CD14-positive monocyte (primary cell): ENCODE measurements at regions of chr15 and their contacts with region 1.

Region 1: GRCh38 chr15:75042730-75043508 is 19.5 kb downstream of the PPCDC start:
- DNase-seq: peak; percentile 99 to 100 (median 99)
- H3K4me3 ChIP-seq: peak overlapping the region in 1 of 3 experiments; percentile 65
- H3K4me3 Mint-ChIP-seq: peak overlapping the region; percentile 75 to 78
- H3K27ac ChIP-seq: peak overlapping the region; percentile 98 to 100
- H3K27ac Mint-ChIP-seq: peak overlapping the region; percentile 98 to 100 (median 99)
- H3K4me1 ChIP-seq: peaks cover 85 to 98% of the 10 kb centered on the region in 2 donors
- H3K4me1 Mint-ChIP-seq: peaks cover 95% of the 10 kb centered on the region
- H3K27me3 ChIP-seq: no peaks in the 10 kb centered on the region
- H3K27me3 Mint-ChIP-seq: peaks cover 0 to 4% (median 2%) of the 10 kb centered on the region in 3 donors
- CTCF ChIP-seq: peak; percentile 78

Region 2: GRCh38 chr15:75029378-75030022 is 13.4 kb before region 1 on chr15:
- intact Hi-C with region 1: loop called in 1 of 2 experiments (anchors 2 kb)
- DNase-seq: peak; percentile 90 to 94 (median 94)
- H3K4me3 ChIP-seq: peak overlapping the region in 2 of 3 experiments; percentile 12 to 64
- H3K4me3 Mint-ChIP-seq: peak overlapping the region; percentile 65 to 84
- H3K27ac ChIP-seq: peak overlapping the region; percentile 82 to 84
- H3K27ac Mint-ChIP-seq: peak overlapping the region; percentile 83 to 92 (median 89)
- H3K4me1 ChIP-seq: peaks cover 70 to 71% of the 10 kb centered on the region in 2 donors
- H3K4me1 Mint-ChIP-seq: peaks cover 66% of the 10 kb centered on the region
- H3K27me3 ChIP-seq: no peaks in the 10 kb centered on the region
- H3K27me3 Mint-ChIP-seq: peaks cover 0 to 1% (median 0%) of the 10 kb centered on the region in 3 donors
- CTCF ChIP-seq: peak; percentile 81

Region 3: GRCh38 chr15:75076277-75076676 is 33.4 kb after region 1 on chr15:
- intact Hi-C with region 1: loop called (anchors 5 kb)
- DNase-seq: no peak
- H3K4me3 ChIP-seq: no peak overlapping the region
- H3K4me3 Mint-ChIP-seq: no peak overlapping the region
- H3K27ac ChIP-seq: peak overlapping the region; percentile 48 to 82
- H3K27ac Mint-ChIP-seq: peak overlapping the region in 2 of 7 donors; percentile 50 to 63
- H3K4me1 ChIP-seq: peaks cover 41 to 48% of the 10 kb centered on the region in 2 donors
- H3K4me1 Mint-ChIP-seq: peaks cover 35% of the 10 kb centered on the region
- H3K27me3 ChIP-seq: no peaks in the 10 kb centered on the region
- H3K27me3 Mint-ChIP-seq: peaks cover 2 to 7% (median 4%) of the 10 kb centered on the region in 3 donors
- CTCF ChIP-seq: no peak

Region 4: GRCh38 chr15:75090388-75090734 is 47.4 kb after region 1 on chr15:
- intact Hi-C with region 1: loop called in 1 of 2 experiments (anchors 1 kb)
- DNase-seq: peak; percentile 76 to 97 (median 90)
- H3K4me3 ChIP-seq: peak overlapping the region in 2 of 3 experiments; percentile 20 to 53
- H3K4me3 Mint-ChIP-seq: peak overlapping the region; percentile 62 to 84
- H3K27ac ChIP-seq: peak overlapping the region in 1 of 2 donors; percentile 65
- H3K27ac Mint-ChIP-seq: peak overlapping the region; percentile 79 to 91 (median 83)
- H3K4me1 ChIP-seq: peaks cover 15 to 16% of the 10 kb centered on the region in 2 donors
- H3K4me1 Mint-ChIP-seq: peaks cover 17% of the 10 kb centered on the region
- H3K27me3 ChIP-seq: no peaks in the 10 kb centered on the region
- H3K27me3 Mint-ChIP-seq: peaks cover 0 to 6% (median 0%) of the 10 kb centered on the region in 3 donors
- CTCF ChIP-seq: no peak

Region 5: GRCh38 chr15:75104804-75105535 is 62.1 kb after region 1 on chr15:
- intact Hi-C with region 1: loop called (anchors 1 to 5 kb)
- DNase-seq: peak; percentile 88 to 95 (median 95)
- H3K4me3 ChIP-seq: peak overlapping the region in 1 of 3 experiments; percentile 26
- H3K4me3 Mint-ChIP-seq: peak overlapping the region; percentile 32 to 44
- H3K27ac ChIP-seq: peak overlapping the region; percentile 77 to 93
- H3K27ac Mint-ChIP-seq: peak overlapping the region; percentile 87 to 97 (median 94)
- H3K4me1 ChIP-seq: peaks cover 53 to 57% of the 10 kb centered on the region in 2 donors
- H3K4me1 Mint-ChIP-seq: peaks cover 61% of the 10 kb centered on the region
- H3K27me3 ChIP-seq: no peaks in the 10 kb centered on the region
- H3K27me3 Mint-ChIP-seq: peaks cover 0 to 5% (median 0%) of the 10 kb centered on the region in 3 donors
- CTCF ChIP-seq: no peak

Region 6: DNA sequence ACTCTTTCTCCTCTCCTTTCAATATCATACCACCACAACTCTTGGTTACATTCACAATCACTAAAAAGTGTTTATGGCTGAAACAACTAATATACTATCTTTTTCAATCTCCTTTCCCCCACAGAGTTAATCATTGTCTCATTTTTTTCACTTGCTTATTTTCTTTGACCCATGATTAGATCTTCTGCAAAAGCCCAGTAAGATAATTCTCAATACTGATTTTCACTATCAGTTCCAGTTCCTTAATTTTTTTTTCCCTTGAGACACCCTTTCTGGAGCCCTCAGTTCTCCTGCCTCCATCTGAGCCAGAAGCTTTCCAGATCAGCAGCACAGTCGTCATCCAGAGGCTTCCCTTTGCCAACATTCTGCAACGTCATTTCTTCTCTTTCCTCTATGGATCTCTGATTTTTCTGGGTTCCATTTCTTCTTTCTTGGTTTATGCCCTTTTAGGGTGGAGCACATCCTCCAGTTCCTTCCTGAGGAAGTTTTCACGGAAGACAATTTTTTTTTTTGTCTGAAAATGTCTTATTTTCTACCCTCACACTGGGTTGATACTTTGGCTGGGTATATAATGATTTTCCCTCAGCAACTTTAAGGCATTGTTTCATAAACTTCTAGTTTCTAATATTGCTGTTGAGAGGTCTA is 70.1 kb after region 1 on chr15:
- intact Hi-C with region 1: loop called (anchors 1 to 5 kb)
- DNase-seq: peak; percentile 74 to 92 (median 89)
- H3K4me3 ChIP-seq: peak overlapping the region in 1 of 3 experiments; percentile 12
- H3K4me3 Mint-ChIP-seq: peak overlapping the region; percentile 38 to 71
- H3K27ac ChIP-seq: peak overlapping the region; percentile 87 to 96
- H3K27ac Mint-ChIP-seq: peak overlapping the region; percentile 94 to 99 (median 96)
- H3K4me1 ChIP-seq: peaks cover 63 to 64% of the 10 kb centered on the region in 2 donors
- H3K4me1 Mint-ChIP-seq: peaks cover 65% of the 10 kb centered on the region
- H3K27me3 ChIP-seq: no peaks in the 10 kb centered on the region
- H3K27me3 Mint-ChIP-seq: peaks cover 0 to 7% (median 0%) of the 10 kb centered on the region in 3 donors
- CTCF ChIP-seq: no peak

Region 7: DNA sequence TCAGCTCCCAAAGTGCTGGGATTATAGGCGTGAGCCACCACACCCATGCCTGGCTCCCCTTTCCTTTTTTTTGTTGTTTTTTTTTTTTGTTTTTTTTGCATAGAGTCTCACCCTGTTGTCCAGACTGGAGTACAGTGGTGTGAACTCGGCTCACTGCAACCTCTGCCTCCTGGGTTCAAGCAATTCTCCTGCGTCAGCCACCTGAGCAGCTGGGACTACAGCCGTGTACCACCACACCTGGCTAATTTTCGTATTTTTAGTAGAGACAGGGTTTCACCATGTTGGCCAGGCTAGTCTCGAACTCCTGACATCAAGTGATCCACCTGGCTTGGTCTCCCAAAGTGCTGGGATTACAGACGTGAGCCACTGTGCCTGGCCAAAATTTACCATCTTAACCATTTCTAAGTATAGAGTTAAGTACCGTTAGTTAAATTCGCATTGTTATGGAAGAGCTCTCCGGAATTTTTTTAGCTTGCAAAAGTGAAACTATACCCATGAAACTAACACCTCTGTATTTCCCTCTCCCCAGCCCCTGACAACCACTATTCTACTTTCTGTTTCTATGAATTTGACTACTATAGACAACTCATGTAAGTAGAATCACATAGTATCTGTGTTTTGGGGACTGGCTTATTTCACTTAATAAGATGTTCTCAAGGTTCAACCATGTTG is 87.8 kb after region 1 on chr15:
- intact Hi-C with region 1: loop called in 1 of 2 experiments (anchors 2 kb)
- DNase-seq: peak in 2 of 3 donors; percentile 44 to 76
- H3K4me3 ChIP-seq: peak overlapping the region; percentile 2 to 69 (median 7)
- H3K4me3 Mint-ChIP-seq: peak overlapping the region; percentile 70 to 78
- H3K27ac ChIP-seq: peak overlapping the region; percentile 90 to 91
- H3K27ac Mint-ChIP-seq: peak overlapping the region; percentile 96 to 99 (median 97)
- H3K4me1 ChIP-seq: peaks cover 72 to 81% of the 10 kb centered on the region in 2 donors
- H3K4me1 Mint-ChIP-seq: peaks cover 69% of the 10 kb centered on the region
- H3K27me3 ChIP-seq: no peaks in the 10 kb centered on the region
- H3K27me3 Mint-ChIP-seq: no peaks in the 10 kb centered on the region
- CTCF ChIP-seq: no peak

Region 8: GRCh38 chr15:75249726-75250125 is 206.8 kb after region 1 on chr15:
- intact Hi-C with region 1: no loop called
- DNase-seq: no peak
- H3K4me3 ChIP-seq: no peak overlapping the region
- H3K4me3 Mint-ChIP-seq: no peak overlapping the region
- H3K27ac ChIP-seq: no peak overlapping the region
- H3K27ac Mint-ChIP-seq: no peak overlapping the region
- H3K4me1 ChIP-seq: no peaks in the 10 kb centered on the region
- H3K4me1 Mint-ChIP-seq: no peaks in the 10 kb centered on the region
- H3K27me3 ChIP-seq: no peaks in the 10 kb centered on the region
- H3K27me3 Mint-ChIP-seq: peaks cover 6 to 12% (median 9%) of the 10 kb centered on the region in 3 donors
- CTCF ChIP-seq: no peak